Mucosa of descending colon (tissue), 3 donors: ENCODE measurements at regions of chr13 and their contacts with region 1.

Region 1: GRCh38 chr13:110412132-110412914 is 105.2 kb downstream of the COL4A2 start:
- DNase-seq: peak; percentile 66 to 86 (median 85)
- ATAC-seq: peak; percentile 86
- H3K4me3 ChIP-seq: no peak overlapping the region
- H3K4me1 ChIP-seq: peaks cover 3% of the 10 kb centered on the region
- CTCF ChIP-seq: peak; percentile 79

Region 2: DNA sequence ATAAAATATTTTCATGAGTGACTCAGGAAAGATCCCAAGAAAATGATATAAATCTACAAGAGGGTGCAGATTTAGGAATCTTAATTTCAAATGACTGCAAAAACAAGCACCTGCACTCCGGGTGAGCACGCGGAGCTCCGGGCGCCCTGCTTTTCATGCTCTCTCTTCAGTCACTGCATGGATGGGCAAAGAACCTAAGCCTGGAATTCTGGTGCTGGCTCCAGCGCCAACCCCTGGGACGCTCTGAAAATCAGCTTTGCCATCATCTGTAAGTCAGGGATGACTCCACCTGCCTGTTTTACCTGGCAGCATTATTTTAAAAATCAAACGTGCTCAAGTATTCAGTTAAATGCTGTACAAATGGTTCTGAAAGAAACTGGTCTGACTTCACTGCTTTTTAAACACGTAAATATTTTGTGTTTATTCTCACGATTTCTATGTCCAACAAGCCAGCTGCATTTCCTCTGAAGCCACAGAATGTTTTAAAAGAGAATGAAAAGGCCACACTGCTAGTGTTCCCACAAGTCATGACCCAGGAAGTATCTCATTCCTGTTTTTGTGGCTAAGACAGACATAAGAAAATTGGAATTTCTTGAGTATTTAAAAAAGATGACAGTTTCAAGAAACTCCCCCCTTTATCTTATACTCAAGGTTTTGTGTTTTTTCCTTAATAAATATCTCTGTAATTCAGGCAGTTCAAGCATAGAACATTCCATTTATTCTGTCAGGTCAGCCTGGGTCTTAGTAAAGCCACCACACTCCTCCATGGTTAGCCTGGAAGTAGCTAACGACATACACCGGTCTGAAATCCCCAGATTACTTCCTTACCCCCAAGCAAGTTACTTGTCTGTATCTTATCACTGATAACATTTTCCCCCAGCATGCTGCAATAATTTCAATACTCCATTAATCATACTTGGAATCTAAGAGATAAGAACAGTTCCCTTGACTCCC is 186.4 kb before region 1 on chr13:
- intact Hi-C with region 1: loop called (anchors 10 kb)
- DNase-seq: no peak
- ATAC-seq: no peak
- H3K4me3 ChIP-seq: no peak overlapping the region
- H3K4me1 ChIP-seq: peaks cover 2% of the 10 kb centered on the region
- CTCF ChIP-seq: no peak

Region 3: DNA sequence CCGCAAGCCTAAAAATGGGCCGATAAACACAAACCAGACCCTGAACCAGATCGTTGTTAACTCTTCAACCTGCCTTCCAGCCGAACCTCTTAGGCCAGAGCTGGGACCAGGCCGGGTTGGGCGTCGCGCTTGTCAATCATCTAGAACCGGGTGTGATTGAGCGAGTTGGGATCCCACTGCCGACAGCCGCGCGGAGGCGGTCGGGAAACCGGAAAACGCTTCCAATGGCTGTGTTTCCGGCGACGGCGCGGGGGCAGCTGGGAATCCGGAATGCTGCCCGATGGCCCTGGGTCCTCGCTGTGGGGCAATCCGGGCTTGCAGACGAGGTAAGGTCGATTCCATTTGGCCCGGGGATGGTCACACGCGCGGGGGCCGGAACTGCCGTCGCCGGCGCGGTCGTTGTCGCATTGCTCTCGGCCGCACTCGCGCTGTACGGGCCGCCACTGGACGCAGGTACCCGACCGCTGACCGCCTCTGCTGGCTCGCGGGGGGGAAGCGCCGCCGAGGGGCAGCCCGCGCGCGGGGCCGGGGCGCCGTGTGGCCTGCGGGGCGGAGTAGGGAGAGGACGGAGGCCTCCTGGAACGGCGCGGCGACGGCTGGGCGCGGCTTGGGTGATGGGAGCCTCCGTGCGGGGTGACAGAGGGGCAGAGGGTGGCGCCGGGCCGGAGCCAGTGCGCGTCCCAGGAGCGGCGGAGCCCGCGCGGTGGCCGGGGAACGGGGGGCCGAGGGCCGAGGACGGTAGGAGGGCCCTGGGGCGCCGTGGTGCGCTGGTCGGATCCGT is 203.2 kb after region 1 on chr13 and contains the start of gene NAXD:
- intact Hi-C with region 1: no loop called
- DNase-seq: peak; percentile 94 to 96 (median 94)
- ATAC-seq: peak; percentile 92
- H3K4me3 ChIP-seq: peak within 1 kb of the TSS; percentile 91
- H3K4me1 ChIP-seq: peaks cover 24% of the 10 kb centered on the region
- CTCF ChIP-seq: no peak
- total RNA-seq, gene NAXD: 32.8 to 49.6 (median 38.8) TPM